ENCODE measurements at regions of chr5 and their contacts with region 1.

Region 1: GRCh38 chr5:86968301-86968753 is 299.4 kb upstream of the RASA1 start:
- DNase-seq: peak; percentile 94
- ATAC-seq: peak; percentile 90
- H3K4me3 ChIP-seq: peak overlapping the region; percentile 48
- H3K27ac ChIP-seq: peak overlapping the region; percentile 58
- H3K4me1 ChIP-seq: peaks cover 17% of the 10 kb centered on the region
- H3K27me3 ChIP-seq: no peaks in the 10 kb centered on the region
- CTCF ChIP-seq: peak; percentile 91

Region 2: GRCh38 chr5:86565197-86565789 is 403.0 kb before region 1 on chr5:
- CTCF ChIA-PET with region 1: no interaction called
- POLR2A ChIA-PET with region 1: no interaction called
- intact Hi-C with region 1: loop called (anchors 1 kb)
- DNase-seq: no peak
- ATAC-seq: no peak
- H3K4me3 ChIP-seq: no peak overlapping the region
- H3K27ac ChIP-seq: no peak overlapping the region
- H3K4me1 ChIP-seq: no peaks in the 10 kb centered on the region
- H3K27me3 ChIP-seq: no peaks in the 10 kb centered on the region
- CTCF ChIP-seq: no peak

Region 3: GRCh38 chr5:86679529-86679928 is 288.8 kb before region 1 on chr5:
- CTCF ChIA-PET with region 1: no interaction called
- POLR2A ChIA-PET with region 1: no interaction called
- intact Hi-C with region 1: loop called (anchors 1 kb)
- DNase-seq: peak; percentile 79
- ATAC-seq: peak; percentile 93
- H3K4me3 ChIP-seq: no peak overlapping the region
- H3K27ac ChIP-seq: no peak overlapping the region
- H3K4me1 ChIP-seq: no peaks in the 10 kb centered on the region
- H3K27me3 ChIP-seq: peaks cover 5% of the 10 kb centered on the region; the same call in 1 of the 2 replicates
- CTCF ChIP-seq: peak; percentile 91

Region 4: GRCh38 chr5:86866036-86866435 is 102.3 kb before region 1 on chr5:
- CTCF ChIA-PET with region 1: no interaction called
- POLR2A ChIA-PET with region 1: no interaction called
- intact Hi-C with region 1: no loop called
- DNase-seq: no peak
- ATAC-seq: no peak
- H3K4me3 ChIP-seq: no peak overlapping the region
- H3K27ac ChIP-seq: no peak overlapping the region
- H3K4me1 ChIP-seq: no peaks in the 10 kb centered on the region
- H3K27me3 ChIP-seq: no peaks in the 10 kb centered on the region
- CTCF ChIP-seq: no peak

Region 5: GRCh38 chr5:86880785-86881492 is 87.4 kb before region 1 on chr5:
- CTCF ChIA-PET with region 1: interaction called, 66 read pairs
- POLR2A ChIA-PET with region 1: no interaction called
- intact Hi-C with region 1: loop called (anchors 1 kb)
- DNase-seq: peak; percentile 96
- ATAC-seq: peak; percentile 91
- H3K4me3 ChIP-seq: no peak overlapping the region
- H3K27ac ChIP-seq: no peak overlapping the region
- H3K4me1 ChIP-seq: peaks cover 13% of the 10 kb centered on the region; the same call in 1 of the 2 replicates
- H3K27me3 ChIP-seq: no peaks in the 10 kb centered on the region
- CTCF ChIP-seq: peak; percentile 100

Region 6: DNA sequence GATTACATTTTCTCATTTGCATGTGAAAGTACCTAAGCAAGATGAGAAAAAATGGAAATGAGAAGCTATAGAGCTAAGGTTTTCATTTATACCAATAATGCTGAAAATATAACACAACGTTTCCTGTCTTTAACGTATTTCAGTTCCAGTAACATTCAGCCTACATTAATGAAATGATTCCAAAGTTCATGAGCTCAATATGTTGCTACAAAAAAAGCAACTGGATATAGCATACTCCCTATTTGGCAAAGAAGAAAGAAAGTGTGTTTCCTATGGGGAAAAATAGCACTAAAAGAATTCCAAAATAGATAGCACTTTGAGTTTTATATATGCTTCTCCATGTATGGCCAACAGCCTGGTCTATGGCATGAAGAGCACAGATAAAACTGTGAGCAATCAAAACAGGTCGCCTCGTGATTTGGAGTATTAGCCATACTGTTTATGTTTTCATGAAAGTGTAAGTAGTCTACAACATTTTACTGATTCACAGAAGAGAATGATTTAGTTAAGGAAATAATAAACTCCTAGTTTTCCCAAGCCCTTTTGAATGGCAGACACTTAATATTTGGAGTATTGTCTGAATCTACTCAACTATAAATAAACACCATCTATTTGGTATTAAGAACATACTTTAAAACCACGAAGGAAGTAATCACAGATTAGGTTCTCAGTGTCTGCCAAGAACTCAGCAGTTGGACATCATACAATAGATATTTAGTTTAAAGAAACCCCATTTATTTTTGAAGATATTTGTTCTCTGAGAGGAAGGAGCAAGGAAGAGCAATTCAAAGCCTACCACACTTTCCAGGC is 40.6 kb after region 1 on chr5:
- CTCF ChIA-PET with region 1: interaction called, 5 read pairs
- POLR2A ChIA-PET with region 1: interaction called, 4 read pairs
- intact Hi-C with region 1: loop called (anchors 1 kb)
- DNase-seq: no peak
- ATAC-seq: peak; percentile 31
- H3K4me3 ChIP-seq: no peak overlapping the region
- H3K27ac ChIP-seq: no peak overlapping the region
- H3K4me1 ChIP-seq: peaks cover 5% of the 10 kb centered on the region
- H3K27me3 ChIP-seq: no peaks in the 10 kb centered on the region
- CTCF ChIP-seq: no peak

Region 7: DNA sequence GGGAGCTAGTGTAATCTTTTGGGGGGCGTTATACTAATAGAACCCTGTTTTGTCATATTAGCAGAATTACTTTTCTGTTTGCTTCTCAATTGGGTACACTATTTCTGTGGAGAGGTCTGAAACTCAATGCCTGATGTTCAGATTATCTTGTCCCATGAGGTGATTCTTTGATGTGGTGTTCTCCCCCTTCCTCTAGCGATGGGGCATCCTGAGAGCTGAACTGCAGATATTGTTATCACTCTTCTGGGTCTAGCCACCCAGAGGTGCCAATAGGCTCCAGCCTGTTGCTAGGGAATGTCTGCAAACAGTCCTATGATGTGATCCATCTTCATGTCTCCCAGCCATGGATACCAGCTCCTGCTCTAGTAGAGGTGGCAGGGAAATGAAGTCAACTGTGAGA is 66.2 kb after region 1 on chr5:
- CTCF ChIA-PET with region 1: no interaction called
- POLR2A ChIA-PET with region 1: no interaction called
- intact Hi-C with region 1: no loop called
- DNase-seq: no peak
- ATAC-seq: no peak
- H3K4me3 ChIP-seq: no peak overlapping the region
- H3K27ac ChIP-seq: no peak overlapping the region
- H3K4me1 ChIP-seq: no peaks in the 10 kb centered on the region
- H3K27me3 ChIP-seq: no peaks in the 10 kb centered on the region
- CTCF ChIP-seq: no peak

Region 8: GRCh38 chr5:87405472-87406155 is 437.3 kb after region 1 on chr5:
- CTCF ChIA-PET with region 1: no interaction called
- POLR2A ChIA-PET with region 1: no interaction called
- intact Hi-C with region 1: no loop called
- DNase-seq: no peak
- ATAC-seq: no peak
- H3K4me3 ChIP-seq: no peak overlapping the region
- H3K27ac ChIP-seq: no peak overlapping the region
- H3K4me1 ChIP-seq: peaks cover 5% of the 10 kb centered on the region
- H3K27me3 ChIP-seq: no peaks in the 10 kb centered on the region
- CTCF ChIP-seq: no peak

Region 9: GRCh38 chr5:87732875-87733768 is 764.8 kb after region 1 on chr5:
- CTCF ChIA-PET with region 1: no interaction called
- POLR2A ChIA-PET with region 1: no interaction called
- intact Hi-C with region 1: no loop called
- DNase-seq: no peak
- ATAC-seq: no peak
- H3K4me3 ChIP-seq: no peak overlapping the region
- H3K27ac ChIP-seq: no peak overlapping the region
- H3K4me1 ChIP-seq: no peaks in the 10 kb centered on the region
- H3K27me3 ChIP-seq: no peaks in the 10 kb centered on the region
- CTCF ChIP-seq: no peak

Measured in PC-3 (cell line).